ENCODE measurements at regions of chr1 and their contacts with region 1.

Region 1: GRCh38 chr1:197915862-197916499 is 1.2 kb upstream of the LHX9 start:
- DNase-seq: peak; percentile 79
- ATAC-seq: peak; percentile 83
- H3K4me3 ChIP-seq: peak overlapping the region; percentile 81
- H3K27ac ChIP-seq: no peak overlapping the region
- H3K4me1 ChIP-seq: peaks cover 4% of the 10 kb centered on the region; the same call in 1 of the 2 replicates
- H3K27me3 ChIP-seq: no peaks in the 10 kb centered on the region
- CTCF ChIP-seq: peak; percentile 70

Region 2: GRCh38 chr1:197783510-197783948 is 132.5 kb before region 1 on chr1:
- CTCF ChIA-PET with region 1: no interaction called
- POLR2A ChIA-PET with region 1: interaction called, 21 read pairs
- intact Hi-C with region 1: no loop called
- DNase-seq: peak; percentile 93
- ATAC-seq: peak; percentile 89
- H3K4me3 ChIP-seq: no peak overlapping the region
- H3K27ac ChIP-seq: peak overlapping the region; percentile 98
- H3K4me1 ChIP-seq: peaks cover 53% of the 10 kb centered on the region
- H3K27me3 ChIP-seq: no peaks in the 10 kb centered on the region
- CTCF ChIP-seq: no peak

Region 3: GRCh38 chr1:197825541-197825940 is 90.4 kb before region 1 on chr1:
- CTCF ChIA-PET with region 1: no interaction called
- POLR2A ChIA-PET with region 1: no interaction called
- intact Hi-C with region 1: no loop called
- DNase-seq: no peak
- ATAC-seq: no peak
- H3K4me3 ChIP-seq: no peak overlapping the region
- H3K27ac ChIP-seq: no peak overlapping the region
- H3K4me1 ChIP-seq: no peaks in the 10 kb centered on the region
- H3K27me3 ChIP-seq: no peaks in the 10 kb centered on the region
- CTCF ChIP-seq: no peak

Region 4: GRCh38 chr1:198096390-198096789 is 180.4 kb after region 1 on chr1:
- CTCF ChIA-PET with region 1: no interaction called
- POLR2A ChIA-PET with region 1: no interaction called
- intact Hi-C with region 1: no loop called
- DNase-seq: no peak
- ATAC-seq: no peak
- H3K4me3 ChIP-seq: no peak overlapping the region
- H3K27ac ChIP-seq: no peak overlapping the region
- H3K4me1 ChIP-seq: no peaks in the 10 kb centered on the region
- H3K27me3 ChIP-seq: no peaks in the 10 kb centered on the region
- CTCF ChIP-seq: no peak

Measured in PC-3 (cell line).